ENCODE measurements at regions of chr12 and their contacts with region 1.

Region 1: GRCh38 chr12:13100882-13101769 is 2.3 kb downstream of the GSG1 start:
- DNase-seq: peak; percentile 67
- ATAC-seq: peak; percentile 65
- H3K4me3 ChIP-seq: peak overlapping the region; percentile 48 to 64
- H3K27ac ChIP-seq: peak overlapping the region; percentile 92
- H3K4me1 ChIP-seq: peaks cover 44 to 70% of the 10 kb centered on the region in 2 experiments
- H3K27me3 ChIP-seq: no peaks in the 10 kb centered on the region
- CTCF ChIP-seq: no peak
- POLR2A ChIP-seq: no peak
- RAD21 ChIP-seq: no peak

Region 2: GRCh38 chr12:12983420-12984035 is 117.6 kb before region 1 on chr12:
- CTCF ChIA-PET with region 1: no interaction called
- POLR2A ChIA-PET with region 1: no interaction called
- RAD21 ChIA-PET with region 1: no interaction called
- intact Hi-C with region 1: no loop called
- DNase-seq: peak; percentile 33
- ATAC-seq: peak; percentile 81
- H3K4me3 ChIP-seq: no peak overlapping the region
- H3K27ac ChIP-seq: no peak overlapping the region
- H3K4me1 ChIP-seq: no peaks in the 10 kb centered on the region
- H3K27me3 ChIP-seq: no peaks in the 10 kb centered on the region
- CTCF ChIP-seq: peak; percentile 59 to 79 (median 69); a peak in 5 of 6 replicates
- POLR2A ChIP-seq: no peak
- RAD21 ChIP-seq: peak; percentile 85

Region 3: GRCh38 chr12:12999959-13000615 is 101.0 kb before region 1 on chr12 and contains the start of gene HEBP1:
- CTCF ChIA-PET with region 1: no interaction called
- POLR2A ChIA-PET with region 1: no interaction called
- RAD21 ChIA-PET with region 1: interaction called in 1 of 2 experiments, 5 read pairs
- intact Hi-C with region 1: loop called (anchors 5 kb)
- DNase-seq: peak; percentile 69
- ATAC-seq: peak; percentile 83
- H3K4me3 ChIP-seq: peak within 1 kb of the TSS; percentile 72 to 90
- H3K27ac ChIP-seq: peak within 1 kb of the TSS; percentile 55
- H3K4me1 ChIP-seq: peaks cover 3 to 18% of the 10 kb centered on the region in 2 experiments; a peak in 3 of 4 replicates
- H3K27me3 ChIP-seq: no peaks in the 10 kb centered on the region
- CTCF ChIP-seq: no peak
- POLR2A ChIP-seq: no peak
- RAD21 ChIP-seq: no peak
- total RNA-seq, gene HEBP1: 41.0 TPM

Region 4: GRCh38 chr12:13114251-13115052 is 13.3 kb after region 1 on chr12:
- CTCF ChIA-PET with region 1: no interaction called
- POLR2A ChIA-PET with region 1: no interaction called
- RAD21 ChIA-PET with region 1: no interaction called
- intact Hi-C with region 1: no loop called
- DNase-seq: no peak
- ATAC-seq: no peak
- H3K4me3 ChIP-seq: no peak overlapping the region
- H3K27ac ChIP-seq: no peak overlapping the region
- H3K4me1 ChIP-seq: peaks cover 13 to 23% of the 10 kb centered on the region in 2 experiments
- H3K27me3 ChIP-seq: no peaks in the 10 kb centered on the region
- CTCF ChIP-seq: no peak
- POLR2A ChIP-seq: no peak
- RAD21 ChIP-seq: no peak

Region 5: DNA sequence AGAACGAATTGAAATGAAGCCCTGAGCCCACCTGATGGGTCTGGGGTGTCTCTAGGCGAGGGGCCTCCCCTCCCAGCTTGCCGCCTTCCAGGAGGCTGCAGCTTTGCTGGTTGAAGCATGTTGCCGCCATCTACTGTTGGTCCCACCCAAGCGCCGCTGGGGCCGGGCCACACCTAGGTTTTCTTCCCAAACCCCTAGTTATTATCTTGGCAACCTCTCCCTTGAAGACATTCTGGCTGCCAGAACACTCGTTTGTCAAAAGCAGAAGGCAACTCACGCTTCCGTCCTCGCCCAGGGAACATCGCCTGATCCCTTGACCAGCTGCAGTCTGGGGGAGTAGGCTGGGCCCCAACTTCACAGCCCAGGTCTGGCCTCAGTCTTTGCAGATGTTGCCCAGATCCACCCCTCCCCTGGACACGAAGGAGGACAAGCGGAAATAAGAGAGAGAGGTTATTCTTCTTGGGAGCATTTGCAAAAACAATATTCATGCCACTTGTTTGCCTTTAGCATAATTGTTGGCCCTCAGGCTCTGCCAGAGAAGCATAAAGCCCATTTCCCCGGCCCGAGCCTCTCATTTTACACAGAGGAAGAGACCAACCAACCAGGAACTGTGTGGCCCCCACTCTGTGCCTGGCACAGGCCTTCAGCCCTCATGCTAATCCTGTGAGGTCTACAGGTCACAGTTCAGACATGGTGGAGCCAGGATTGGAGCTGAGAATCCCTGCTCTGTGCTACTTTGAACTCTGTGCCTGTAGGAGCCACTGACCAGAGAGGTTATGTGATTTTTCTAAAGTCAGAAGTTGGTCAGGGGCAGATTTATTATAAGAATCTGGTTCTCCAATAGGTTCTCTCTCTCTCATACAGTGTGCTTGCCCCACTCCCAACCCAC is 102.2 kb after region 1 on chr12:
- CTCF ChIA-PET with region 1: interaction called, 14 read pairs
- POLR2A ChIA-PET with region 1: interaction called, 4 read pairs
- RAD21 ChIA-PET with region 1: interaction called, 4 to 8 read pairs
- intact Hi-C with region 1: loop called (anchors 1 kb)
- DNase-seq: no peak
- ATAC-seq: peak; percentile 47
- H3K4me3 ChIP-seq: 0 out of 4 replicates have a peak overlapping the region, but pooled peaks of 1 of the 2 experiments have one; percentile 45
- H3K27ac ChIP-seq: peak overlapping the region; percentile 82
- H3K4me1 ChIP-seq: peaks cover 50 to 100% of the 10 kb centered on the region in 2 experiments
- H3K27me3 ChIP-seq: no peaks in the 10 kb centered on the region
- CTCF ChIP-seq: peak; percentile 38 to 57 (median 48); a peak in 5 of 6 replicates
- POLR2A ChIP-seq: no peak
- RAD21 ChIP-seq: peak; percentile 85

Region 6: DNA sequence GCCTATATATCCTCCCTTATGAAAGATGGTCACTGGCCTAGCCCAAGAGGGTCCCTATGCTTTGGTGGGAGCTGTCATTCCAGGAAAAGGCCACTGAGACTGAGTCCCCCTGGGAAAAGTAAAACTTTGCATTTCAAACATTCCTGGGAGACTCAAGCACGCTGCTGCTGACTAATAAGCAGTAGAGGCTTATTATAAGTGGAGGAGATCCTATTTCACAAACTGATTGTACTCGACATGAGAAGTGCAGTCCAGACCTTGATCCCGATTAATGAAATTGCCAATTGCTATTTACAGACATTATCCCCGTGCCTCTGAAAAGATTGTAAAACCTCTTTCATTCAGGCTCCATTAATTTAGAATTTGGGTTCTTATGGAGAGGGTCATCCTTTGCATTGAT is 192.0 kb after region 1 on chr12:
- CTCF ChIA-PET with region 1: no interaction called
- POLR2A ChIA-PET with region 1: no interaction called
- RAD21 ChIA-PET with region 1: no interaction called
- intact Hi-C with region 1: no loop called
- DNase-seq: no peak
- ATAC-seq: no peak
- H3K4me3 ChIP-seq: no peak overlapping the region
- H3K27ac ChIP-seq: no peak overlapping the region
- H3K4me1 ChIP-seq: no peaks in the 10 kb centered on the region
- H3K27me3 ChIP-seq: no peaks in the 10 kb centered on the region
- CTCF ChIP-seq: no peak
- POLR2A ChIP-seq: no peak
- RAD21 ChIP-seq: no peak

Region 7: DNA sequence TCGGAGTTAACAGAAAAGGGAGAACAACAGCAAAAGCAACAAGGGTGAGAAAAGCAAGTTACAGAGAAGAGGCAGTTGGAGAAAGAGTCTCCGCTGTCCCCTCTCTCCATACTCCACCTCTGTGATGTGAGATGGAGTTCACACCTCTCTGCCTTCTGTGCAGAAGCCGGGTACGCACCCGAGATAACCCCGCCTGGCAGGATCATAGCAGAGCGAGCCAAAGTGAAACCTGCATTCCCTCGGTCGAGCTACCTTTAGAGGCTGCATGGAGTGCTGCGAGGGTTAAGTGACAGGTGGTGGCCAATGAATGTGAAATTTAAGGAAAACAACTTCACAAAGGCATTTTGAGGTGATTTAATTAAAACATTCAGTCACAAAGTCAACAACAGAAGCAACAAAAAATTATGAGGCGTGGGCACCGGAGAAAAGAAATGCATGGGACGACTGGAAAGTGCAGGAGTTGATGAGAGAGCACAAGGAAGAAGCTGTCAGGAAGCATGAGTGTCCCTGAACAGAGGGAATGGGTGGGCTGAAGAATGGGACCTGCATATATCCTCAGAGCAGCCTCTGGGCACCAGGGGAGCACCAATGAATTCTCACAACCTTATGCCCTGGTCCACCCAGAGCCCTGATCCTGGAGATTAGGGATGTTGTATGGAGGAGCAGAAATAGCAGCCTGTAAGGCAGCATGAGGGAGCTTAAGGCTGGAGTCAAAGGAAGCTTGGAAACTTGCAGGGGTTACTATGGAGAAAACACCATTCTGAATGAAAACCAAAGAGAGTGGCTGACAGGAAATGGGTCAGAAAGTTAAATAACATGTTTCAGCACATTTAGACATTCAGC is 303.7 kb after region 1 on chr12:
- CTCF ChIA-PET with region 1: no interaction called
- POLR2A ChIA-PET with region 1: no interaction called
- RAD21 ChIA-PET with region 1: no interaction called
- intact Hi-C with region 1: no loop called
- DNase-seq: no peak
- ATAC-seq: no peak
- H3K4me3 ChIP-seq: no peak overlapping the region
- H3K27ac ChIP-seq: no peak overlapping the region
- H3K4me1 ChIP-seq: no peaks in the 10 kb centered on the region
- H3K27me3 ChIP-seq: no peaks in the 10 kb centered on the region
- CTCF ChIP-seq: no peak
- POLR2A ChIP-seq: no peak
- RAD21 ChIP-seq: no peak

Measured in HCT116 (cell line).